ENCODE measurements at regions of chr6 and their contacts with region 1.

Region 1: GRCh38 chr6:26216356-26216885 is 129.2 kb downstream of the HFE start:
- DNase-seq: peak; percentile 89
- H3K4me3 Mint-ChIP-seq: no peak overlapping the region
- H3K27ac Mint-ChIP-seq: no peak overlapping the region
- H3K4me1 Mint-ChIP-seq: peaks cover 5% of the 10 kb centered on the region
- H3K27me3 Mint-ChIP-seq: no peaks in the 10 kb centered on the region

Region 2: DNA sequence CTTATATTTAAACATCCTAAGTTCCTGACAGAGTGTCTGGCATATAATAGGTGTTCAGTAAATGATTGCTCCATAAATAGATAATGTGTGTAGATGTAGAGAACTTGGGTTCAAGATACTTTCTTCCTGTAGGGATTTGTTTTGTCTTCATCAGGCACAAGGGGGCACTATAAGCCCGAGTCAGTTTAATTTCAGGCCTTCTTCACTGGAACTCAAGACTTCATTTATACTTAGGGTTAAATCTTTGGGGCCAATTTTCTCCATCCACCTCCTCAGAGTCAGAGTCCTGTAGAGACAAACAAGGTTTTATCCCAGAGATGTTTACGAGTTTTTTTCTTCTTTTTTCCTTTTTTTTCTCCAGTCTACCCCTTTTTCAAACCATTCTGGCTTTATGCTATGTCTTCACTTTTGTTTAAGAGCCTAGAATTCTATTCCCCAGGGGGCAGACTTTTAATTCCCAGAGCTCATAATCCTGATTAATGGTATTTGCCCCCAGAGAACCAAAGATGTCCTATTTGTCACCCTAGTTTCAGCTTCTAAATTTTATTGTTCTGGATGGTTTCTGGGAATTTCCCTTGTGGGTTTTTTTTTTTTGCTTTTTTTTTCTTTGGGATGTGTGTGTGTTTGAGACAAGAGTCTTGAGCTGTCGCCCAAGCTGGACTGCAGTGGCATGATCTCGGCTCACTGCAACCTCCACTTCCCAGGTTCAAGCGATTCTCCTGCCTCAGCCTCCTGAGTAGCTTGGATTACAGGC is 40.8 kb before region 1 on chr6:
- CTCF ChIA-PET with region 1: interaction called, 5 read pairs
- POLR2A ChIA-PET with region 1: interaction called, 17 read pairs
- intact Hi-C with region 1: loop called (anchors 1 kb)
- DNase-seq: peak; percentile 63
- H3K4me3 Mint-ChIP-seq: peak overlapping the region; percentile 24
- H3K27ac Mint-ChIP-seq: peak overlapping the region; percentile 43
- H3K4me1 Mint-ChIP-seq: peaks cover 31% of the 10 kb centered on the region
- H3K27me3 Mint-ChIP-seq: no peaks in the 10 kb centered on the region

Region 3: DNA sequence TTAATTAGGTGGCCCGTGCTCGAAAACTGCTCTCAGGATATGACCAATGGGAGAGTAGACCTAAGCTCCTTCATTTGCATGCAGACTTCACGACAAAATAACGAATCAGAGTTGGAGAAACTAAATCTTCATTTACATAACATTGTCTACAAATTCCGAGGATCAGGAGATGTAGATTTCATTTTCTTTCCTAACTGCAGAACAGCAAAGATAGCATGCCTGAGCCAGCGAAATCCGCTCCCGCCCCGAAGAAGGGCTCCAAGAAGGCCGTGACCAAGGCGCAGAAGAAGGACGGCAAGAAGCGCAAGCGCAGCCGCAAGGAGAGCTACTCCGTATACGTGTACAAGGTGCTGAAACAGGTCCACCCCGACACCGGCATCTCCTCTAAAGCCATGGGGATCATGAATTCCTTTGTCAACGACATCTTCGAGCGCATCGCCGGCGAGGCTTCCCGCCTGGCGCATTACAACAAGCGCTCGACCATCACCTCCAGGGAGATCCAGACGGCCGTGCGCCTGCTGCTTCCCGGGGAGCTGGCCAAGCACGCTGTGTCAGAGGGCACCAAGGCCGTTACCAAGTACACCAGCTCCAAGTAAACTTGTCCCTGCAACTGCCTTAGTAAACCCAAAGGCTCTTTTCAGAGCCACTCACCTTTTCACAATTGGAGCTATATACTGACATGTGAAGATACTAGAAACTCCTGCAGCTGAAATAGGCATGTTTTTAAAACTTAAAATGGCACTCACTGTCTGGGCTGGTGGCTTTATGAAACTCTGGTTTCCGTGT is 32.6 kb before region 1 on chr6:
- CTCF ChIA-PET with region 1: interaction called, 14 read pairs
- POLR2A ChIA-PET with region 1: interaction called, 51 read pairs
- intact Hi-C with region 1: no loop called
- DNase-seq: peak; percentile 80
- H3K4me3 Mint-ChIP-seq: peak overlapping the region; percentile 85
- H3K27ac Mint-ChIP-seq: peak overlapping the region; percentile 95
- H3K4me1 Mint-ChIP-seq: peaks cover 37% of the 10 kb centered on the region
- H3K27me3 Mint-ChIP-seq: peaks cover under 1% of the 10 kb centered on the region

Region 4: GRCh38 chr6:26196846-26197648 is 19.4 kb before region 1 on chr6:
- CTCF ChIA-PET with region 1: interaction called, 37 read pairs
- POLR2A ChIA-PET with region 1: interaction called, 298 read pairs
- intact Hi-C with region 1: loop called (anchors 1 kb)
- DNase-seq: peak; percentile 84
- H3K4me3 Mint-ChIP-seq: peak overlapping the region; percentile 86
- H3K27ac Mint-ChIP-seq: peak overlapping the region; percentile 99
- H3K4me1 Mint-ChIP-seq: peaks cover 31% of the 10 kb centered on the region
- H3K27me3 Mint-ChIP-seq: peaks cover 3% of the 10 kb centered on the region

Region 5: DNA sequence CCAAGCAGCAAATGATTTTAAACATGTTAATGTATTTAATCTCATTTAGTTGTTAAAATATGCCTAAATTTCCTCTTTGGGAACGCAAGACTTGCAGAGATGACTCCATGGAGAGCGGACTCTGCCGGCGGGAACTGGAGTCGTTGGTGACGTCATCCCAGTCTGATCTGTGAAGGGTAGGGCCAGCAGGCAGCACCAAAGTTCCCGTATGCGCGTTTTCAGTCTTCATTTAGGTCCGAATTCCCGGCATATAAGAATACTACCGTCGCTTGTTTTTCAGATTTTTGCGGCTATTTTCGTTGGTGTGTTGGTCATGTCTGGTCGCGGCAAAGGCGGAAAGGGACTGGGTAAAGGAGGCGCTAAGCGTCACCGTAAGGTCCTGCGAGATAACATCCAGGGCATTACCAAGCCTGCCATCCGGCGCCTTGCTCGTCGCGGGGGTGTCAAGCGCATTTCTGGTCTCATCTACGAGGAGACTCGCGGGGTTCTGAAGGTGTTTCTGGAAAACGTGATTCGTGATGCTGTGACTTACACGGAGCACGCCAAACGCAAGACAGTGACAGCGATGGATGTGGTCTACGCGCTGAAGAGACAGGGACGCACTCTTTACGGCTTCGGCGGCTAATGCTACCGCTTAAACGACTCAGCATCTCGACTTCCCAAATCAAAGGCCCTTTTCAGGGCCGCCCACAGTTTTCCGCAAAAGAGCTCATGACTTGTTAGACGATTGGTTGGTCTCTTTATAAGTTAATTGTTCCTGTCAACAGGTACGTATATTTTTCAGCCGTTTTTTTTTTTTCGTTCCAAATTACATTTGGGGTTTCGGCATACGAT is 11.9 kb before region 1 on chr6:
- CTCF ChIA-PET with region 1: interaction called, 37 read pairs
- POLR2A ChIA-PET with region 1: interaction called, 298 read pairs
- intact Hi-C with region 1: loop called (anchors 1 kb)
- DNase-seq: peak; percentile 90
- H3K4me3 Mint-ChIP-seq: no peak overlapping the region
- H3K27ac Mint-ChIP-seq: no peak overlapping the region
- H3K4me1 Mint-ChIP-seq: peaks cover 21% of the 10 kb centered on the region
- H3K27me3 Mint-ChIP-seq: peaks cover 3% of the 10 kb centered on the region

Region 6: DNA sequence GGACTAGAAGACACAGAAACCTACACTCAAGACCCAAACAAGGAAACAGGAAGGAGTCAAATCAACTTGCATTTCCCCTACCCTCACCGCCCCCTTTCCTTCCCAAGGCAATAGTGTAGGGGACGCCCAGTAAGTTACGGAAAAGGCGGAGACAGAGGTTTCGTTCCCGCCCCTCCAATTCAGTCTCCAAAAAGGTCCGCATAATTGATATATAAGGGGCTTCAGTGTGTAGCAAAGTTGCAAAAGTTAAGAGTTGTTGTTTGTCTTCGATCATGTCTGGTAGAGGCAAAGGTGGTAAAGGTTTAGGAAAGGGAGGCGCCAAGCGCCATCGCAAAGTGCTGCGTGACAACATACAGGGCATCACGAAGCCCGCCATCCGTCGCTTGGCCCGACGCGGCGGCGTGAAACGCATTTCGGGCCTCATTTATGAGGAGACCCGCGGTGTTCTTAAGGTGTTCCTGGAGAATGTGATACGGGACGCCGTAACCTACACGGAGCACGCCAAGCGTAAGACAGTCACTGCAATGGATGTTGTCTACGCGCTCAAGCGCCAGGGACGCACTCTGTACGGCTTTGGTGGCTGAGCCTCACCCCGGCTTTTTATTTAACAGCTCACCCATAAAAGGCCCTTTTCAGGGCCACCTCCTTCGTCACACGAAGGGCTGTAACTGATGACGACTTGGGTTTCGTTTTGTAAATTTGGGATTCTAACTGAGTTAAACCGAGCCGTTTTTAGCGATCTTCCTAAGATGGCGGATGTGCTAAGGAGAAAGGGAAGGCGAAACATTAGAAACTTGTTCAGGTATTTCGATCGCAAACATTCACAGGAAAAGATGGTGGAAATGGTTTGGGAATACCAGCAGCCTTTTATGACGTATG is 24.0 kb after region 1 on chr6:
- CTCF ChIA-PET with region 1: interaction called, 16 read pairs
- POLR2A ChIA-PET with region 1: interaction called, 219 read pairs
- intact Hi-C with region 1: no loop called
- DNase-seq: peak; percentile 85
- H3K4me3 Mint-ChIP-seq: peak overlapping the region; percentile 70
- H3K27ac Mint-ChIP-seq: peak overlapping the region; percentile 91
- H3K4me1 Mint-ChIP-seq: peaks cover 20% of the 10 kb centered on the region
- H3K27me3 Mint-ChIP-seq: peaks cover 4% of the 10 kb centered on the region

Region 7: DNA sequence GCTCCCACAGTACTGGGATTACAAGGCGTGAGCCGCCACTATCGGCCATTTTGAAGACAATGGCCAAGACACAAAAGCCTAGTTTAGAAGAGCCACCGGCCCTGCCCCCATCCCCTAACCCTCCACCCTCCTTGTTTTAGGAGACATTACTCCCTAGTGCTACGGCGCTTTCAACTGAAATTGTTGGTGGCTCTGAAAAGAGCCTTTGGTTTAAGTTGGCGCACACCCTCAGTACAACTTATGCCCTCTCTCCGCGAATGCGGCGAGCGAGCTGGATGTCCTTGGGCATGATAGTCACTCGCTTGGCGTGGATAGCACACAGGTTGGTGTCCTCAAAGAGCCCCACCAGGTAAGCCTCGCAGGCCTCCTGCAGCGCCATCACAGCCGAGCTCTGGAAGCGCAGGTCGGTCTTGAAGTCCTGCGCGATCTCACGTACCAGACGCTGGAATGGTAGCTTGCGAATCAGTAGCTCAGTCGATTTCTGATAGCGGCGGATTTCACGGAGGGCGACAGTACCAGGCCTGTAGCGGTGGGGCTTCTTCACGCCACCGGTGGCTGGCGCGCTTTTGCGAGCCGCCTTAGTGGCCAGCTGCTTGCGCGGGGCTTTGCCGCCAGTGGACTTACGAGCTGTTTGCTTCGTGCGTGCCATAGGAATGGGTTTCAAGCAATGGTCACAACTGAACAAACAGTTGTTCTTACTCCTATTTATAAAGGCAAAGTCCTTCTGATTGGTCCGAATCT is 33.7 kb after region 1 on chr6:
- CTCF ChIA-PET with region 1: no interaction called
- POLR2A ChIA-PET with region 1: no interaction called
- intact Hi-C with region 1: loop called (anchors 2 kb)
- DNase-seq: peak; percentile 84
- H3K4me3 Mint-ChIP-seq: peak overlapping the region; percentile 82
- H3K27ac Mint-ChIP-seq: peak overlapping the region; percentile 99
- H3K4me1 Mint-ChIP-seq: peaks cover 22% of the 10 kb centered on the region
- H3K27me3 Mint-ChIP-seq: no peaks in the 10 kb centered on the region